ENCODE measurements at regions of chr17 and their contacts with region 1.

Region 1: DNA sequence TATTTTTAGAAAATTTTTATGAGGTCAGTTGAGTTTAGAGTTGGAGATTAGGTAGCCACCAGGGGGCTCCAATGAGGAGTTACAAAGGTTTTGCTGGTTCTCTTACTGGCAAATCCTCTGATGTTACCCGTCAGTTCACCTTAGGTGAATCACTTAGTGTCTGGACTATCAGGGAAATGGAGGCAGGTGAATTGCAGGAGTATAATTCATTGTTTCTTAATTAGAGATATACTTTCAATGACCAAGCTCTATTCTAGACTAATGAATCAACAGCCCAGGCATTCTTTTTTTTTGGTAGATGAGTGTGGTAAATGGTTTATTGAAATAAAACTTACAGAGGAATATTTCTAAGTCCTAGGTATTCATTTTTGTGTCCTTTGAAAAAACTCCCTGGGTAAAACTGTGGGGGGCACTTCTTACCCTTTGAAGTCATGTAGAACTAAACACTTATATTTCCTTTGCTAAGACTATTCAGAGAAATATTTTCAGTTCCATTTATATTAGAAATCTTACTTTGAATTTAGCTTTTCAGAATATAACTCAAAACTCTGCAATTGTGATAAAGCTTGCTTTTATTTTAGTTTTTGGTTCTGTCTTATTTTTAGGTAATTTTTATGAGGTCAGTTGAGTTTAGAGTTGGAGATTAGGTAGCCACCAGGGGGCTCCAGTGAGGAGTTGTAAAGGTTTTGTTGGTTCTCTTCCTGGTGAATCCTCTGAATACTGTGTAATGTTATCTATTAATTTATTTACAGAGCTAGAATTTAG is 17.7 kb downstream of the PSMD11 start:
- DNase-seq: no peak
- ATAC-seq: peak; percentile 93
- H3K4me3 ChIP-seq: no peak overlapping the region
- H3K27ac ChIP-seq: no peak overlapping the region
- H3K4me1 ChIP-seq: no peaks in the 10 kb centered on the region
- H3K27me3 ChIP-seq: no peaks in the 10 kb centered on the region
- CTCF ChIP-seq: peak; percentile 35 to 64 (median 59); a peak in 5 of 6 replicates
- EP300 ChIP-seq: no peak
- POLR2A ChIP-seq: no peak
- RAD21 ChIP-seq: peak; percentile 42

Region 2: GRCh38 chr17:31195305-31195704 is 1266.7 kb before region 1 on chr17:
- CTCF ChIA-PET with region 1: no interaction called
- POLR2A ChIA-PET with region 1: no interaction called
- RAD21 ChIA-PET with region 1: no interaction called
- SMC1A ChIA-PET with region 1: no interaction called
- in situ Hi-C with region 1: no loop called
- intact Hi-C with region 1: no loop called
- DNase-seq: no peak
- ATAC-seq: no peak
- H3K4me3 ChIP-seq: no peak overlapping the region
- H3K27ac ChIP-seq: no peak overlapping the region
- H3K4me1 ChIP-seq: no peaks in the 10 kb centered on the region
- H3K27me3 ChIP-seq: no peaks in the 10 kb centered on the region
- CTCF ChIP-seq: no peak
- EP300 ChIP-seq: no peak
- POLR2A ChIP-seq: no peak
- RAD21 ChIP-seq: no peak

Region 3: DNA sequence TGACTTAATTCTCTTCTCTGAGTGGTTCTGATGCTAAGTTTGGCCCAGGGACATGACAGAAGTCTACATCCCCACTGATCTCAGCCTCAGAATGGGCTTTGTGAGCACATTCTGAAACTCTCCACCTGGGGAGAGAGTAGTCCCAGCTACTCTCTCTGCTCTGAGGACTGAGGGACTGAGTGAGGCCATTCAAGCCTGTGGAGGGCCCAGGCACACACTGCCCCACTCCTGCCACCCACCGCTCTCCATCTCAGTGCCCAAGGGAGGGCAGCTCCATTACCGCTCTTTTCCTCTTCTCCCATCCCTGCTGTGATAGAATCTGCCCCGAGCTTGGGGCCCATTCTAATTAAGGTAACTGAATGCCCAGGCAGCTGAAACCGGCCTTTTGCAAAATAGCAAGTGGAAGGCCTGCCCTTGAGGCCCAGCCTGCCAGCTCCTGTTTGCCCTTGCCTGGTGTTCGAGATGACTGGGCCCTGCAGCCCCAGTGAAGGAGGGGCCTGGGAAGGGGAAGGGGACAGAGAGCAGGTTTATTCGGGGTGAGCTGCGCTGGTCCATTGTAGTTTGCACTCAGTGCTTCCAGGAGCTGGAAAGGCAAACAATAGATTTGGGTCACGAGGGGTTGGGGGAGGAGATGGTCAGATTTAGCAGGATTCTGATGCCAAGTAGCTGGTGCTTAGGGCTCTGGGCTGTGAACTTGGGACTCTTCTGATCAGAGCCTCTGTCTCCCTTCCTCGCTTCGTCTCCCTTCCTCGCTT is 994.4 kb before region 1 on chr17:
- CTCF ChIA-PET with region 1: no interaction called
- POLR2A ChIA-PET with region 1: no interaction called
- RAD21 ChIA-PET with region 1: no interaction called
- SMC1A ChIA-PET with region 1: no interaction called
- in situ Hi-C with region 1: no loop called
- intact Hi-C with region 1: no loop called
- DNase-seq: no peak
- ATAC-seq: no peak
- H3K4me3 ChIP-seq: no peak overlapping the region
- H3K27ac ChIP-seq: no peak overlapping the region
- H3K4me1 ChIP-seq: no peaks in the 10 kb centered on the region
- H3K27me3 ChIP-seq: no peaks in the 10 kb centered on the region
- CTCF ChIP-seq: no peak
- EP300 ChIP-seq: no peak
- POLR2A ChIP-seq: no peak
- RAD21 ChIP-seq: no peak

Region 4: DNA sequence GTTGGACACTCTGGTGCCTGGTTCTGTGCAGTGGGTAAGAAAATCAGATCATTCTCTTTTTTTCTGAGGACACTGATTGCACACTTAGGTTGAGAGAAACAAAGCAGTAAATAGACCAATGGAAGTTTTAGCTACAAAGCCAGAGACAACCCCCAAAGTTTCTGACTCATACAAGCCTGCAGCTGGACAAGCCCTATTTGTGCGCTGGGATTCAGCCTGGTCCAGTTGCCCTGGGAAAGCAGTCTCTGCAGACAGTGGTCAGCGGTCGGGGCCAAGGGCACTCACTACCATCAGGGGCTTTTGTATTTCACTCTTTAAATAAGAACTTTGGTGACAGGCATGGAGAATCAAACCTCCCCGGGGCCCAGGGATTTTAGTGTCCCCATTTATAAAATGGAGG is 202.4 kb before region 1 on chr17:
- CTCF ChIA-PET with region 1: no interaction called
- POLR2A ChIA-PET with region 1: no interaction called
- RAD21 ChIA-PET with region 1: no interaction called
- SMC1A ChIA-PET with region 1: no interaction called
- in situ Hi-C with region 1: no loop called
- intact Hi-C with region 1: no loop called
- DNase-seq: no peak
- ATAC-seq: no peak
- H3K4me3 ChIP-seq: no peak overlapping the region
- H3K27ac ChIP-seq: no peak overlapping the region
- H3K4me1 ChIP-seq: no peaks in the 10 kb centered on the region; the same call in 1 of the 2 replicates
- H3K27me3 ChIP-seq: peaks cover 4 to 13% of the 10 kb centered on the region in 2 experiments
- CTCF ChIP-seq: no peak
- EP300 ChIP-seq: no peak
- POLR2A ChIP-seq: no peak
- RAD21 ChIP-seq: no peak

Region 5: DNA sequence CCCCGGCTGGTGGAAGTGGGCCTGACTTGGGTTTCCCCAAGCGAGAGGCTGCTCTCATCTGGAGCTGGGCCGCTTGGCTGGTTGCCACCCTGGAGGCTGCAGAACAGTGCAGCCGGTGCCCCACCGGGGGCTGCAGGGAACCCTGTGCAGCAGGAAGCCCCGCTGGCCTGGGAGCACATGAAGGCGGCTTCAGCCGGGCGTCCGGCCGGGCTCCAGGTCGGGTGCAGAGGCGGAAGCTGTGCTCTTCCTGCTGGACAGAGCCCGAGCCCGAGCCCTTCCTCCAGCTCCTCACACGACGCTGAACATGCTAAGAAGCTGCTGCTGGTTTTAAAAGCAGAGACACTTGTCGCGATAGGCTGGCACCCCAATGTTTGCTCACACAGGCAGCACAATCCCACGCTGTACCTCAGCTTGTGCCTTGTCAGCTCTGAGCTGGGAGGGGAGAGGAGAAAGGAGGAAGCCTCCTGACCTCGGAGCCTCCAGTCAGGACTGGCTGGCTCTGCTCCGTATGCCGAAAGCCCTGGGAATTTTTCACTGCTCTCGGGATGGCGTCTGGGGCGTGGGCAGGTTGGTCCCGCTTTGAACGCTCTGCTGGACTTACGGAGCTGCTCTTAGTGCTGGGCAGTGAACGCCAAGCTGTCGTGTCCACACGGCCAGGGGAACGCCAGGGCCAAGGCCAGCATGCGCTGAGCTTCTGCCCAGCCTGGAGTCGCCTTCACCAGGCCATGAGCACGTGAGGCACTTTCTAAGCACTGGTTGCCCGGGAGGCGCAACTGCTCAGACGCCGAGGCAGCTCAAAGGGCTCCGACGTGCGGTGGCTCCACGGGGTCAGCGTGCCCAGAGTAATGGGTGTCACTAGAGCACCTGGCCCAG is 33.6 kb after region 1 on chr17:
- CTCF ChIA-PET with region 1: interaction called, 12 read pairs
- POLR2A ChIA-PET with region 1: interaction called, 5 read pairs
- RAD21 ChIA-PET with region 1: interaction called, 3 read pairs
- SMC1A ChIA-PET with region 1: interaction called, 10 read pairs
- in situ Hi-C with region 1: no loop called
- intact Hi-C with region 1: no loop called
- DNase-seq: no peak
- ATAC-seq: peak; percentile 49
- H3K4me3 ChIP-seq: no peak overlapping the region
- H3K27ac ChIP-seq: no peak overlapping the region
- H3K4me1 ChIP-seq: peaks cover 29% of the 10 kb centered on the region
- H3K27me3 ChIP-seq: no peaks in the 10 kb centered on the region
- CTCF ChIP-seq: no peak
- EP300 ChIP-seq: no peak
- POLR2A ChIP-seq: no peak
- RAD21 ChIP-seq: no peak

Region 6: GRCh38 chr17:32551186-32551955 is 89.3 kb after region 1 on chr17:
- CTCF ChIA-PET with region 1: interaction called, 13 read pairs
- POLR2A ChIA-PET with region 1: no interaction called
- RAD21 ChIA-PET with region 1: no interaction called
- SMC1A ChIA-PET with region 1: interaction called, 3 read pairs
- in situ Hi-C with region 1: no loop called
- intact Hi-C with region 1: no loop called
- DNase-seq: peak; percentile 71
- ATAC-seq: peak; percentile 96
- H3K4me3 ChIP-seq: no peak overlapping the region
- H3K27ac ChIP-seq: peak overlapping the region; percentile 38
- H3K4me1 ChIP-seq: peaks cover 24% of the 10 kb centered on the region
- H3K27me3 ChIP-seq: no peaks in the 10 kb centered on the region
- CTCF ChIP-seq: no peak
- EP300 ChIP-seq: peak in 1 of 2 experiments; percentile 48; a peak in 2 of 4 replicates
- POLR2A ChIP-seq: no peak
- RAD21 ChIP-seq: peak; percentile 27; the same call in 1 of the 2 replicates

Region 7: DNA sequence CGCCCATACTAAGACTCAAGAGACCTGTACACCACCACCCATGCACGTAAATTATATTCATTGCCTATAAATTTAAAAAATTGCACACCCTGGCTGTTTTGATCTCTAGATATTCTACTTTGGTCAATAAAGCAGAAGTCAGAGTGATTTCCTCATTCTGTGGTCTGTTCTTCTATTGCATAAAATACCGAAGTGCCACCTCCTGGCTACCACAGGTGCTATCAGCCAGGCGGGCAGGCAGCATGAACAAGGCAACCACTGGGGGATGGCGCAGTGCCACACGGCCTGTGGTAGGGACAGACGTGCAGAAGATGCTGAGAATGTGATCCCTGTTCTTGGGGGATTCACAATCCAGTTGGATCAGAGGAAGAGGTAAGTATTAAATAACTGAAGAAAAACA is 147.1 kb after region 1 on chr17:
- CTCF ChIA-PET with region 1: interaction called, 17 read pairs
- POLR2A ChIA-PET with region 1: no interaction called
- RAD21 ChIA-PET with region 1: interaction called, 8 read pairs
- SMC1A ChIA-PET with region 1: interaction called, 28 read pairs
- in situ Hi-C with region 1: no loop called
- intact Hi-C with region 1: loop called (anchors 5 kb)
- DNase-seq: peak; percentile 59
- ATAC-seq: peak; percentile 100
- H3K4me3 ChIP-seq: no peak overlapping the region
- H3K27ac ChIP-seq: no peak overlapping the region
- H3K4me1 ChIP-seq: peaks cover 7% of the 10 kb centered on the region
- H3K27me3 ChIP-seq: no peaks in the 10 kb centered on the region
- CTCF ChIP-seq: peak; percentile 73 to 88 (median 78)
- EP300 ChIP-seq: no peak; a peak in 1 of 4 replicates
- POLR2A ChIP-seq: no peak
- RAD21 ChIP-seq: peak; percentile 88

Region 8: GRCh38 chr17:32755045-32755805 is 293.2 kb after region 1 on chr17:
- CTCF ChIA-PET with region 1: interaction called, 19 read pairs
- POLR2A ChIA-PET with region 1: no interaction called
- RAD21 ChIA-PET with region 1: interaction called, 10 read pairs
- SMC1A ChIA-PET with region 1: interaction called, 17 read pairs
- in situ Hi-C with region 1: no loop called
- intact Hi-C with region 1: loop called (anchors 5 kb)
- DNase-seq: no peak
- ATAC-seq: peak; percentile 73
- H3K4me3 ChIP-seq: no peak overlapping the region
- H3K27ac ChIP-seq: no peak overlapping the region
- H3K4me1 ChIP-seq: no peaks in the 10 kb centered on the region
- H3K27me3 ChIP-seq: no peaks in the 10 kb centered on the region
- CTCF ChIP-seq: peak in 2 of 3 experiments; percentile 19 to 56; a peak in 4 of 6 replicates
- EP300 ChIP-seq: no peak
- POLR2A ChIP-seq: no peak
- RAD21 ChIP-seq: peak; percentile 83

Region 9: DNA sequence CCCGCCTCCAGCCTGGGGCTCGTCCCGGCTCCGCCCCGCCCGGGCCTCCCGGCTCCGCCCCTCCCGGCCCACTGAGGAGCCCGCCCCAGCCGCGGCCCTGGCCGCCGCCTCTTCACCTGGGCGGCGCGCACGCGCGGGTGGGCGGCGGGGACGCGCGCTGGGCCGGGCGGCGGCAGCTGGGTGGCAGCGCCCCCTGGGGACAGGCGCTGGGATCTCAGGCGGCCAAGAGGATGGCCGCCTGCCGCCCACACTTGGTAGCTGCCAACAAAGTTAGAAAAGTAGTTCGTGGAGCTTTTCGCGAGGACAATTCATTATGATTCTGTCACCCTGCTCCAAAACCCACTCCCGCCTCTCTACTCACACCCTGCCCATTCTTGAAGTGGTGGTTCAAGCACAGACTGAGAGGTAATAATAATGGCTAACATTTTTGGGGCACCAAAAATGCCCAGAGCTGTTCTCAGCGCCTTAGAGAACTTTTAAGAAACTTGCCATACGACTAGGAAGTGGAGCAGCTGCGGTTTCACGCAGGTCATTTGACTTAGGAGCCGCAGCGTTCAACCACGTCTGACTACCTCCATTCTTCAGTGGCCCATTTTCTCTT is 415.2 kb after region 1 on chr17:
- CTCF ChIA-PET with region 1: interaction called, 27 read pairs
- POLR2A ChIA-PET with region 1: interaction called, 5 read pairs
- RAD21 ChIA-PET with region 1: interaction called, 4 read pairs
- SMC1A ChIA-PET with region 1: interaction called, 3 read pairs
- in situ Hi-C with region 1: no loop called
- intact Hi-C with region 1: no loop called
- DNase-seq: peak; percentile 37
- ATAC-seq: peak; percentile 92
- H3K4me3 ChIP-seq: peak overlapping the region; percentile 51
- H3K27ac ChIP-seq: peak overlapping the region; percentile 66
- H3K4me1 ChIP-seq: no peaks in the 10 kb centered on the region
- H3K27me3 ChIP-seq: no peaks in the 10 kb centered on the region
- CTCF ChIP-seq: peak; percentile 83 to 94 (median 88); a peak in 5 of 6 replicates
- EP300 ChIP-seq: no peak
- POLR2A ChIP-seq: no peak
- RAD21 ChIP-seq: peak; percentile 80

Measured in GM12878 (cell line).